ENCODE measurements at regions of chr17 and their contacts with region 1.

Region 1: DNA sequence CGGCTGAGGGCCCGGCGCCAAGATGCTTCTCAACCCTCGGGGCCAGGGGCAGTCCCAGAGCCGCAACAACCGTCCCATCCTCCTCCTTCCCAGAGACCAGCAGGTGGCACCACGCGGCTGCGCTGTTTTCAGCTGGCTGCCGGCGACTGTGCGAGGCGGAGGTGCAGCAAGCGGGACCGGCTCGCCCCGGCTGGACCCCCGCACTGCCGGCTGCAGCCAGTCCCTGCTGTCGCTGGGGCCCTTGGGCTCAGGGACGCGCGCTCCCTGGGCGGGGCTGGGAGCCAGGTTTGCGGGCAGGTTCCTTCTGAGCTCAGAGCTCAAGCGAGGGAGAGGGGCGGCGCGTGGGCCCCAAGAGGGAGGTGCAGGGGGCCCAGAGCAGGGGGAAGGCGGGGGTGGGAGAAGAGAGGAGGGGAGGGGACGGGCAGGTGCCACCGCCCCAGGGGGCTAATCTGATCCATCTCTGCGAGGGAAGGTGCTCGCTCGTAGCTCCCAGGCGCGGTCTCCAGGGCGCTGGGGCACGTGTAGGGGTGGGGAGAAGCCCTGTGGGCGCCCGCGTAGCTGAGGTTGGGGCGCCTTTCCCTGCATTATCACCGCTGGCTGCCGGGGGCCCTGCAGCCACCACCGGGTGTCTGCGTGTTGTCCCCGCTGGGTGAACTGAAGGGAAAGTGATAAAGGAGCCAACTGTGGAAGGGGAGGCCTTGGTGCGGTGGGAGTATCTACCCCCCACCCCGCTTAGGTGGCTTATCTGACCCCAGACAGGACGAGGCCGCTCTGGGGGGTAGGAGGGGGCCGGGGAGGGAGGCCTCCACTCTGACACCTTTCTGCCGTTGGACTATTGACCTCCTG is 24.2 kb downstream of the STAT5A start:
- DNase-seq: peak; percentile 95
- H3K4me3 Mint-ChIP-seq: peak overlapping the region; percentile 44
- H3K27ac Mint-ChIP-seq: peak overlapping the region; percentile 92
- H3K4me1 Mint-ChIP-seq: peaks cover 86% of the 10 kb centered on the region
- H3K27me3 Mint-ChIP-seq: no peaks in the 10 kb centered on the region

Region 2: GRCh38 chr17:42221937-42222745 is 90.4 kb before region 1 on chr17:
- CTCF ChIA-PET with region 1: interaction called, 42 read pairs
- intact Hi-C with region 1: loop called (anchors 1 kb)
- DNase-seq: peak; percentile 73
- H3K4me3 Mint-ChIP-seq: no peak overlapping the region
- H3K27ac Mint-ChIP-seq: peak overlapping the region; percentile 6
- H3K4me1 Mint-ChIP-seq: peaks cover 2% of the 10 kb centered on the region
- H3K27me3 Mint-ChIP-seq: no peaks in the 10 kb centered on the region

Region 3: GRCh38 chr17:42287926-42288802 is 24.3 kb before region 1 on chr17 and contains the start of gene STAT5A:
- CTCF ChIA-PET with region 1: interaction called, 13 read pairs
- intact Hi-C with region 1: loop called (anchors 1 kb)
- DNase-seq: peak; percentile 88
- H3K4me3 Mint-ChIP-seq: peak within 1 kb of the TSS; percentile 86
- H3K27ac Mint-ChIP-seq: peak within 1 kb of the TSS; percentile 95
- H3K4me1 Mint-ChIP-seq: peaks cover 68% of the 10 kb centered on the region
- H3K27me3 Mint-ChIP-seq: no peaks in the 10 kb centered on the region
- total RNA-seq, gene STAT5A: 165 to 174 TPM

Region 4: GRCh38 chr17:42322382-42323267 is 10.1 kb after region 1 on chr17:
- CTCF ChIA-PET with region 1: interaction called, 20 read pairs
- intact Hi-C with region 1: loop called (anchors 1 kb)
- DNase-seq: peak; percentile 99
- H3K4me3 Mint-ChIP-seq: peak overlapping the region; percentile 9
- H3K27ac Mint-ChIP-seq: peak overlapping the region; percentile 81
- H3K4me1 Mint-ChIP-seq: peaks cover 55% of the 10 kb centered on the region
- H3K27me3 Mint-ChIP-seq: no peaks in the 10 kb centered on the region

Region 5: DNA sequence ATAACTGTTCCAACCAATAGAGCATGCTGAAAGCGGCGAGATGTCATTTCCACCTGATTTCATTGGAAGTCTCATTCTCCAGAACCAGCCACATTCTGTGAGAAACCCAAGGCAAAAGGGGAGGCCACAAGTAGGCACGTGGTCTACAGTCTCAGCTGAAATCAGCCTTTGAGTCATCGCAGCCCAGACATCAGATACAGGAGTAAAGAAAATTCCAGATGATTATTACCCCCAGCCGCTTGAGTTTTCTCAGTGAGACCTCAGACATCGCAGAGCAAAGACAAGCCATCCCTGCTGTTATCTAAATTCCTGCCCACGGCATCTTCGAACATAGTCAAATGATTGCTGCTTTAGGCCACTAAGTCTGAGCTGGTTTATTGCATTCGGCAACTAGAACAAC is 52.6 kb after region 1 on chr17:
- CTCF ChIA-PET with region 1: no interaction called
- intact Hi-C with region 1: no loop called
- DNase-seq: peak; percentile 19
- H3K4me3 Mint-ChIP-seq: no peak overlapping the region
- H3K27ac Mint-ChIP-seq: peak overlapping the region; percentile 28
- H3K4me1 Mint-ChIP-seq: peaks cover 83% of the 10 kb centered on the region
- H3K27me3 Mint-ChIP-seq: no peaks in the 10 kb centered on the region

Region 6: DNA sequence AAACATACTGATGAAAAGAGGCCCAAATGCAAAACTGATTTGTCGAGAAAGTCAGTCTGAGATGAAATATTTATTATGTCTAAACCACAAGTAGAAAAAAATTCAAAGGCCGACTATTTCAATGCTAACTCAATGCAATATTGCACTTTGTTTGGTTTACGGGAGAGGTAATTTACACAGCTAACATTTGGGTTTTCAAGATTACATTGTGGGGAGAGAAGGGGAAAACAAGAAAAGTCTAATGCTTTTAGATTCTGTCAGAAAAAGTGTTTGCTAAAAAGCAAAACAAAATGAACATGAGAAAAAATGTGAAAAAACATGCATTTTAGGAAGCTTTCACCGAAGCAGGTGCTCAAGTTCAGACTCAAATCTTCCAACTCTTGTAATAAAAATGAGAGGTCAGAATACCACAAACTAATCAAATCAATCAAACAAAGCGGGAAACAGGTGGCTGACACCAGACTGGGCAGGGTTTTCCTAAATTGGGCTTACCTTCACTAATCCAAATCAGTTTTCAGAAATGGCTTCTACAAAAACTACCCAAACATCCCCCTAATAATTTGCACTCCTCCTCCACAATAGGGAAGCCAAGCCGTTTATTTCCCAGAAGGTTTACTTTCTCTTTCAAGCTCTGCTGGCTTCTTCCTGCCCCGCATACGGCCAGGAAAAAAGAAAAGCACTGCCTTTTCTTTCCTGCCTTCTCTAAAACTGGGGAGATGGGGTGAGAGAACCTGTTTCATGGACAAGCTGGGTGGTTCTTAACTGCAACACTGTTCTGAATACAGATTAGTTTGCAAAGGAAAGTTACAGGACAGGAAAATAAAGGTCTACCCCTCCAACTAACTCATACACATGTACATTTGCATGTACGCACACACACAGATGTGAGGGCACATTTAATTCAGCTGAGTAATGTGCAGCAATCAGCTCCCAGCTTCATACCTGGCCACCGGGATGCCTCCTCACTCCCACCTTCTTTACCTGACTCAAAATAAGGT is 66.4 kb after region 1 on chr17:
- CTCF ChIA-PET with region 1: no interaction called
- intact Hi-C with region 1: loop called (anchors 2 kb)
- DNase-seq: peak; percentile 73
- H3K4me3 Mint-ChIP-seq: peak overlapping the region; percentile 63
- H3K27ac Mint-ChIP-seq: peak overlapping the region; percentile 95
- H3K4me1 Mint-ChIP-seq: peaks cover 90% of the 10 kb centered on the region
- H3K27me3 Mint-ChIP-seq: no peaks in the 10 kb centered on the region

Region 7: GRCh38 chr17:42517516-42517915 is 205.0 kb after region 1 on chr17:
- CTCF ChIA-PET with region 1: no interaction called
- intact Hi-C with region 1: loop called (anchors 5 kb)
- DNase-seq: peak; percentile 89
- H3K4me3 Mint-ChIP-seq: no peak overlapping the region
- H3K27ac Mint-ChIP-seq: no peak overlapping the region
- H3K4me1 Mint-ChIP-seq: peaks cover 4% of the 10 kb centered on the region
- H3K27me3 Mint-ChIP-seq: no peaks in the 10 kb centered on the region